ENCODE measurements at regions of chr12 and their contacts with region 1.

Region 1: DNA sequence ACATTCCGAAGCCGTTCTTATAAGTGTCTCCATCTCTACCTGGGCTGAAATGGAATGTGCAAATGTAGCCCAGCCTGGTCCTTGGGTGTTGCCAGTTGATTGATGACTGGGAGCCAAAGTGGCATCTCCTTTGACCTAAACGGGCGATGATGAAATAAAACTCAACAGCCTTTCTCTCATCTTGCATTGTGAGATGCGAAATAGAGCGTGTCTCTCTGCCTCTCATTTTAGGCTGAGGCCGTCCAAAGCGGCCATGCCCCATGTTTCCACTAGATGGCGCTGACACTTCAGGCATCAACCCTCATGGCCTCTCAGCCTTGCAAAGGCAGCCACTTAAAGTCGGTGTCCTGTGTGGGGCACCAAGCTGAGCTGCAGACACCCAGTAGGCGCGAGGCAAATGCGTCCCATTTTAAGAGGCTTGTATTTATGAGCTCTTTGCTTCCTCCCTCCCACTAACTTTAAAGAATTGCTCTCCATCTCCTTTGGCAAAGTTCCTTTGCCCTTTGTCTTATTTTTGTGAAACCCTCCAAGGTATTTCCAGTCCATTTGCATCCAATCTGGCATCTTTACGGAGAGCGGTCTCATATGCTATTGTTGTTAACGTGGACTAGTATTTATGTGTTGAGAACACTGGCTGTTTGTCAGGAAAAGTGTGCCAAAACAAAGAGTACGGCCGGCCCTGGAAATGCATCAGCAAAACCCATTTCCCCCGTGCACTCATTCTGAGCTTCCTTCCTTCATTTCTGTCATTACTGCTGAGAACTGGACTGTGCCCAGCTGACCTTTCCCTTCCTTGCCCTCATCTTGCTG is 25.0 kb downstream of the GPRC5A start:
- DNase-seq: peak; percentile 73
- ATAC-seq: peak; percentile 91
- H3K4me3 ChIP-seq: no peak overlapping the region
- H3K27ac ChIP-seq: no peak overlapping the region
- H3K4me1 ChIP-seq: peaks cover 10% of the 10 kb centered on the region
- H3K27me3 ChIP-seq: no peaks in the 10 kb centered on the region
- CTCF ChIP-seq: peak; percentile 95
- POLR2A ChIP-seq: peak; percentile 56
- RAD21 ChIP-seq: peak; percentile 97

Region 2: DNA sequence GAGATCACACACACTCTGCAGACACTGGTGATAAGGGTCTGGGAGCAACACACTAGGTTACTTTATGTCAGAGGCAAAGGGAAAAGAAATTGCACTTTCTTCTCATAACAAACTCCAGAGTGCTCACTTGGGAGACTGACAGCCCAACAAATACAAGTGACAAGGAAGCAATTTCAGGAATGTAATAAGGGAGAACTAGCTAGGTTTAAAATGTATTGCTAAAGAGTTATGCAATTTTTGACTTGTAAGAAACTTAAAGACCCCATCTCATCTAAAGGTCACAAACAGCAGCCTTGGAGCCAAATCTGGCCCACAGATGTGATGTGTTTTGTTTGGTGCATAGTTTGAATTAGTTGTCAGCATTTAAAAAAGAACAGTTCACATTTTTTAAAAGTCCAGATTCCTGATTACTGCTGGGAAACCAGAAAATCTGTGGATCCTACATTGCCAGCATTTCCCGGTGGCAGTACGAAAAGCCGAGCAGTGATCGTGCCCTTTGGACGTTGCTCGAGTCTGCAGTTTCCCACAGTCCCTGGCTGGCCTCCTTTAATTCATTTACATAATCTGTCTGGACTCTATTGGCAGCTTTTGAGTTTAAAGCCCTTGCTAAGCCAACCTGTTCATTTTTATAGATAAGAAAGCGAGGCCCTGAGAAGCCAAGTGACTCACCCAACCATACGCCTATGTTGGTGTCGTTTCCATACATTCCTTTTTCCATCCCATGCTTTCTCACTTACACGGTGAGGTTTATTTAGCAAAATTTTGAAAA is 1308.8 kb before region 1 on chr12:
- CTCF ChIA-PET with region 1: no interaction called
- POLR2A ChIA-PET with region 1: no interaction called
- dilution Hi-C with region 1: no loop called
- in situ Hi-C with region 1: no loop called
- intact Hi-C with region 1: no loop called
- DNase-seq: peak; percentile 65
- ATAC-seq: peak; percentile 83
- H3K4me3 ChIP-seq: no peak overlapping the region
- H3K27ac ChIP-seq: peak overlapping the region; percentile 41; the same call in 1 of the 2 replicates
- H3K4me1 ChIP-seq: peaks cover 5% of the 10 kb centered on the region
- H3K27me3 ChIP-seq: no peaks in the 10 kb centered on the region; the same call in 1 of the 2 replicates
- CTCF ChIP-seq: no peak
- POLR2A ChIP-seq: no peak
- RAD21 ChIP-seq: no peak

Region 3: DNA sequence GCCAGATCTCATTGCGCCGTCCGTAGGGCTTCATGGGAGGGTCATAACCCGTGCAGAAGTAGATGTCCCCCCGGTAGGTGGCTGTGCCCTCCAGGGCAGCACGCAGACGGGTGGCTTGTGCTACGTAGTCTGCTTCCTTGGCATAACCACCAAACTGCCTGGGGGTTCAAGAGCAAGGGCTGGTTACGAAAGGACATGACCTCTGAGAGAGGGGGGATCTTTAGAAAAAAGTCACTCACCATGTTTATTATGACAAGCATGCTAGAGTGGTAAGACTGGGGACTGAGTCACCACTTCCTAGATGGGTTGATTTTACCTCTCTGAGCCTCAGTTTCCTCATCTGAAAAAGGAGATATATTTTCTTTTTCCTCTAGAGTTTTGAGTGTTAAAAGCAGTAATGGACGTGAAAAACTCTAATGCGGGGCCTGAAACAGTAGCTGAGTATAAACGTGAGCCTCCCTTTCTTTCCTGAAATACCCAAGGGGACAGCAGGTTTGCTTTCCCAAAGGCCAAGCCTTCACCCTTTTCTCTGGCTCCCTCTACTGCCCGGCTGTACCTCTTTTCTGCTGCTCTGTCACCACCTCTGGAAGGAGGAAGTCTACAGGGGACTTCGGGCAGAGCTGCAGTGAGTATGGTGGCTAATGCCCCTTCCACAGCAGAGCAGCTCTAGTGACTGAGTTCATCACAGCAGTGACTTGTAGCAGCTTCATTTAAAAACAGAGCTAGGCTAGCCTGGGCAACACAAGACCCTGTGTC is 59.2 kb after region 1 on chr12:
- CTCF ChIA-PET with region 1: interaction called, 5 read pairs
- POLR2A ChIA-PET with region 1: no interaction called
- dilution Hi-C with region 1: no loop called
- in situ Hi-C with region 1: loop called (anchors 5 kb)
- intact Hi-C with region 1: loop called (anchors 1 kb)
- DNase-seq: peak; percentile 59
- ATAC-seq: no peak
- H3K4me3 ChIP-seq: no peak overlapping the region
- H3K27ac ChIP-seq: peak overlapping the region; percentile 43
- H3K4me1 ChIP-seq: peaks cover 23% of the 10 kb centered on the region
- H3K27me3 ChIP-seq: no peaks in the 10 kb centered on the region
- CTCF ChIP-seq: peak; percentile 51
- POLR2A ChIP-seq: no peak
- RAD21 ChIP-seq: peak; percentile 57

Region 4: GRCh38 chr12:12983420-12984035 is 67.2 kb after region 1 on chr12:
- CTCF ChIA-PET with region 1: interaction called, 5 read pairs
- POLR2A ChIA-PET with region 1: no interaction called
- dilution Hi-C with region 1: no loop called
- in situ Hi-C with region 1: loop called (anchors 5 kb)
- intact Hi-C with region 1: loop called (anchors 1 kb)
- DNase-seq: peak; percentile 69
- ATAC-seq: peak; percentile 46
- H3K4me3 ChIP-seq: no peak overlapping the region
- H3K27ac ChIP-seq: no peak overlapping the region
- H3K4me1 ChIP-seq: peaks cover 20% of the 10 kb centered on the region
- H3K27me3 ChIP-seq: no peaks in the 10 kb centered on the region
- CTCF ChIP-seq: peak; percentile 79
- POLR2A ChIP-seq: no peak
- RAD21 ChIP-seq: peak; percentile 88

Region 5: DNA sequence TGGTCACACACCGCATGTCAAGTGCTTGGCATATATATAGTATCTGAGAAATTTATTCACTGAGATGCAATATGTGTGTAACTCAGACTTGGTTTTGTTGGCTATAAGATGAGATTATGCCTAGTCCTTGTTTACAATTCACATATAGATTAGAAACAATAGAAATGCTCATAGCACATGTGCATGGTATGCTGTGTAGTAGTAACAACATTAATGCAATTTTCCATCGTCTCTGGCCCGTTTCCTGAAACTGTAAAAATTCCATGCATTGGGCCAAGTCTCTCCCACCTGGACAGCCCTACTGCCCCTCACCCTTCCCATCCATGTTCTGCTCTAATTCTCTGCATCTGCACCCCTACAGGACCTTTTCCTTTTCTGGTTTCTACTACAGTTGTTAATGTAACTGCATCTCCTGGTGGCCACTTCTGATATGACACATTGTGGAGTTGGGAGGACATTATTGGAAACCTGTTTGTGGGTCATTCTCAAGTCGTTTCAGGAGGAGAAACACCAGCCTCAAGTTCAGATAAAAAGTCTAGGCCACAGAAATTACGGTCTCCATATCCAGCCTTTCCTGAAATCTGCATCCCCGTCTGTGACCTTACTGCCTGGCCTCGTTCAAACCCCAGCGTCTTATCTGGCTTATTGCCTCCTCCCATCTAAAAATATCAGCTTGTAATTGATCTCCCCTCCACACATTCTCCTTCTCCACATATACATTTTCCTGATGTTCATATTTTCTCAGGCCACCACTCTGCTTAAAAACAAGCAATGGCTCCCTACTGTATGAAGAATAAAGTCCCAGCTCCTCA is 317.7 kb after region 1 on chr12:
- CTCF ChIA-PET with region 1: no interaction called
- POLR2A ChIA-PET with region 1: no interaction called
- dilution Hi-C with region 1: no loop called
- in situ Hi-C with region 1: no loop called
- intact Hi-C with region 1: loop called (anchors 1 kb)
- DNase-seq: peak; percentile 70
- ATAC-seq: peak; percentile 98
- H3K4me3 ChIP-seq: no peak overlapping the region
- H3K27ac ChIP-seq: no peak overlapping the region
- H3K4me1 ChIP-seq: no peaks in the 10 kb centered on the region
- H3K27me3 ChIP-seq: no peaks in the 10 kb centered on the region
- CTCF ChIP-seq: peak; percentile 90
- POLR2A ChIP-seq: no peak
- RAD21 ChIP-seq: peak; percentile 92

Region 6: GRCh38 chr12:13864081-13864673 is 947.8 kb after region 1 on chr12:
- CTCF ChIA-PET with region 1: no interaction called
- POLR2A ChIA-PET with region 1: no interaction called
- dilution Hi-C with region 1: no loop called
- in situ Hi-C with region 1: no loop called
- intact Hi-C with region 1: no loop called
- DNase-seq: peak; percentile 61
- ATAC-seq: peak; percentile 67
- H3K4me3 ChIP-seq: no peak overlapping the region
- H3K27ac ChIP-seq: no peak overlapping the region
- H3K4me1 ChIP-seq: no peaks in the 10 kb centered on the region
- H3K27me3 ChIP-seq: no peaks in the 10 kb centered on the region
- CTCF ChIP-seq: peak; percentile 67
- POLR2A ChIP-seq: no peak
- RAD21 ChIP-seq: peak; percentile 52; the same call in 1 of the 2 replicates